ENCODE measurements at regions of chr1 and their contacts with region 1.

Region 1: GRCh38 chr1:201481761-201482493 is 12.9 kb upstream of the PHLDA3 start:
- DNase-seq: peak; percentile 93
- H3K27ac ChIP-seq: peak overlapping the region; percentile 86
- CTCF ChIP-seq: peak; percentile 87

Region 2: DNA sequence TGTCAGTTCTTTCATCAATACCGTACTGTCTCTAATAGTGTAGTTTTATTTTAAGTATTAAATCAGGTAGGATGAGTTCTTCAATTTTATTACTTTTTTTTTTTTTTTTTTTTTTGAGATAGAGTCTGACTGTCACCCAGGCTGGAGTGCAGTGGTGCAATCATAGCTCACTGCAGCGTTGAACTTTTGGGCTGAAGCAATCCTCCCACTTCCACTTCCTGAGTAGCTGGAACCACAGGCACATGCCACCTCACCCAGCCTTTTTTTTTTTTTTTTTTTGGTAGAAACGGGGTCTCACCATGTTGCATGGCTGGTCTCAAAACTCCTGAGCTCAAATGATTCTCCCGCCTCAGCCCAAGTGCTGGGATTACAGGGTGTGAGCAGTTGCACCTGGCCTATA is 543.0 kb before region 1 on chr1:
- CTCF ChIA-PET with region 1: no interaction called
- POLR2A ChIA-PET with region 1: no interaction called
- DNase-seq: no peak
- H3K27ac ChIP-seq: no peak overlapping the region
- CTCF ChIP-seq: no peak

Region 3: GRCh38 chr1:201192261-201192788 is 289.6 kb before region 1 on chr1:
- CTCF ChIA-PET with region 1: no interaction called
- POLR2A ChIA-PET with region 1: no interaction called
- DNase-seq: no peak
- H3K27ac ChIP-seq: no peak overlapping the region
- CTCF ChIP-seq: no peak

Region 4: GRCh38 chr1:201447911-201448871 is 33.7 kb before region 1 on chr1:
- CTCF ChIA-PET with region 1: interaction called, 77 read pairs
- POLR2A ChIA-PET with region 1: interaction called, 5 read pairs
- DNase-seq: peak; percentile 91
- H3K27ac ChIP-seq: peak overlapping the region; percentile 58
- CTCF ChIP-seq: peak; percentile 90

Region 5: GRCh38 chr1:201468844-201469511 is 12.9 kb before region 1 on chr1 and contains the start of gene PHLDA3:
- CTCF ChIA-PET with region 1: interaction called, 24 read pairs
- POLR2A ChIA-PET with region 1: interaction called, 17 read pairs
- DNase-seq: peak; percentile 94
- H3K27ac ChIP-seq: peak within 1 kb of the TSS; percentile 100
- CTCF ChIP-seq: no peak

Region 6: GRCh38 chr1:201506556-201507359 is 24.8 kb after region 1 on chr1 and contains the start of gene CSRP1:
- CTCF ChIA-PET with region 1: interaction called, 464 read pairs
- POLR2A ChIA-PET with region 1: interaction called, 5 read pairs
- DNase-seq: peak; percentile 96
- H3K27ac ChIP-seq: peak within 1 kb of the TSS; percentile 92
- CTCF ChIP-seq: no peak

Region 7: GRCh38 chr1:201703621-201704439 is 221.9 kb after region 1 on chr1:
- CTCF ChIA-PET with region 1: interaction called, 11 read pairs
- POLR2A ChIA-PET with region 1: no interaction called
- DNase-seq: peak; percentile 91
- H3K27ac ChIP-seq: peak overlapping the region; percentile 90
- CTCF ChIP-seq: peak; percentile 96

Region 8: GRCh38 chr1:201870397-201870796 is 388.5 kb after region 1 on chr1:
- CTCF ChIA-PET with region 1: no interaction called
- POLR2A ChIA-PET with region 1: no interaction called
- DNase-seq: no peak
- H3K27ac ChIP-seq: no peak overlapping the region
- CTCF ChIP-seq: no peak